ENCODE measurements at regions of chr19 and their contacts with region 1.

Region 1: DNA sequence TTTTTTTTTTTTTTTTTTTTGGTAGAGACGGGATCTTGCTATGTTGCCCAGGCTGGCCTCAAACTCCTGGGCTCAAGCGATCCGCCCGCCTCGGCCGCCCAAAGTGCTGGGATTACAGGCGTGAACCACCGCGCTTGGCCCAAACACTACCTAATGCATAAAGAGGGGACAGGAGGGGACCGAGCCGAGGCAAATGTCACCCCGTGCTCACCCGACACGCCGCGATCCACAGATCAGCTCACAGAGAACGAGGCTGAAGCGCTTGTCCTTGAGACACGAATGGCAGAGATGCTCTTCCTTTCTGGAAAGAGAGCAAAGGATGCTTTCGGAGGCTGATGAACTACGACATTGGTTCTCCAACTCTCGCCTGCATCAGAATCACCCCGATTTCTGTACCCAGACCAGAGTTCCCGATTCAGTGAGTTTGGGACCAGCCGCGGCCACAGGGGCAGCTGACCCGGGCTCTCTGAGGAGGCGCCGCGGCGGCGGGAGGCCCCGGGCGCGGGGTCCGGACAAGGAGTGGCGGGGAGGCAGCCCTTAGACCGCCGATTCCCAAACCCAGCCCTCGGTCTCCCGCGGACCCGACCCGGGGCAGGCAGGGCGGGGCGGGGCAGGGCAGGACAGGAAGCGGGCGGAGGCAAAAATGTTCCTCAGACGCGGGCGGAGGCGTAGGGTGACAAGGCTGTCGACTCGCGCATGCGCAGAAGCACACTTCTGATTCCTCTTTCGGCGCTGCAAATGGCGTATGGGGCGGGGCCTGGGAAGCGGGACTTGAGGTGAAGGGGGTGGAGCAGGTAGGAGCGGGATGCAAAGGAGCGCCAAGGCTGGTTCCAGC is at the start of gene ZNF699:
- DNase-seq: peak; percentile 94
- CTCF ChIP-seq: no peak

Region 2: GRCh38 chr19:9321338-9321737 is 12.0 kb after region 1 on chr19:
- CTCF ChIA-PET with region 1: interaction called, 10 read pairs
- POLR2A ChIA-PET with region 1: no interaction called
- DNase-seq: no peak
- CTCF ChIP-seq: no peak

Measured in GM10248 (cell line).